Prostate gland (tissue), 2 donors: ENCODE measurements at regions of chr7 and their contacts with region 1.

Region 1: DNA sequence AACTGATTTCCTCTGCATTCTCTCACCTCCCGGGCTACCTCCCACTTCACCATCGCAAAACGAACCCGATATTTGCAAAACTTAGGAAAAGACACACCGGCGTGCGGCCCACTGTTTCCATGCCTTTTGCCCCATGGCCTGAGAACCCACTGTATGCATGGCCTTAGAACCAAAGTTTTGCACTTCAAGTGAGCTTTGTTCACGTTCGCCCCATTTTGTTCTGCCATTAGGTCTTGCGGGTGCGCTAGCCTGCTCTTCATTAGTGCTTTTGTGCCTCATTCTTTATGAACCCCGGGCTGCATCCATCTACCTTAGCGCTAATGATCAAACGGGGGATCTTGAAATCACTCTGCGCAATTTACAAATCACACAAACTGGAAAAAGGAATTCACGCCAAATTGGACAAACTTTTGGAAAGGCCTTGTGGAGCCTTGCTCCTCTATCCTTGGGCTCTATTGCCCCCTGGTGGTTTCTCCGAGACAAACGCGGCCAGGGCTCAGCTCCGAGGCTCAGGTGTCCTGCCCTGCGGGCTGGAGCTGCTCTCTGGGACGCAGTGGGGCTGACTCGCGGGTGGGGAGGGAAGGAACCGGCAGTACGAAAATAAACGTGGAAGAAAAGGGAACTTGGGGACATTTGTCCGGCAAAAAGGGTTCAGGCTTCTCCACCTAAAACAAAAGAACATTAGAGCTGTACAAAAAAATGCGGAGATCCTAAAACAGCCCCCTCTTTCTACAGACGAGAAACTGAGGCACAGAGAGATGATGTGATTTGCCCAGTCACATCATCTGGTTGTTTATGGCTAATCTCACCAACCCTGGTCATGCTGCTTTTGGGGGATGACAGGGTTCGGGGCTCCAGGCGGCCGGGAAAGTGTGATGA is 300.4 kb upstream of the NFE2L3 start:
- DNase-seq: peak; percentile 85
- H3K4me3 ChIP-seq: no peak overlapping the region
- H3K27ac ChIP-seq: peak overlapping the region in 1 of 2 donors; percentile 5
- H3K4me1 ChIP-seq: peaks cover 14% of the 10 kb centered on the region
- H3K27me3 ChIP-seq: peaks cover 15% of the 10 kb centered on the region
- CTCF ChIP-seq: peak; percentile 74 to 93 (median 86)
- POLR2A ChIP-seq: no peak

Region 2: DNA sequence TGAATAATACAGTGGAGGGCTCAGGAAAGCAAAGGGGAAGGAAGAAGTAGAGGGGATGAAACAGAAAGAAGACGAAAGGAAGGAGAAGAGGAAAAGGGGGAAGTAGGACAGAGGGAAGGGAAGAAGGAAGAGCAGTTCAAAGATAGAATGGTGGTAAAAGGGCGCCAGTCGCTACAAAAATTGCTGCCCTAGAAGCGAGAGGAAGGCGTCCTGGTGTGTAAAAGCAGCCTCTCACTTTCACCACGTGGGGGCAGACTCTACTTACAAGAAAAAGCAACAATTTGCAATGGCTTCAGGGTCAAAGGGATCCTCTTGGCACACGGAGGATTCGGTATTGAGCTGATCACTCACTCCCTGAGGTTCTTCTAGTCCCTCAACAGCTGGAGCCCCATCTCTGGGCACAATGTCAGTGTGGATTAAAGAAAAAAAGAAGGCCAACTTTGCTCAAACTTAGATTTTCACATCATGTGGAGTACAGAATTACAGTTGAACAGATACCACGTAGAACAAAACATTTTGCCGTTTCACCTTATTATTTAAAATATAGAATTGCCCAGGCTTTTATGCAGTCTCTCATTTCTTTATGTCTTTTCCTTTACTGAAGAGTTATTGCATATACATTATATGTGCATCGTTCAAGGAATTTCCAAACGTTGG is 591.9 kb before region 1 on chr7:
- intact Hi-C with region 1: loop called (anchors 5 kb)
- DNase-seq: peak; percentile 50
- H3K4me3 ChIP-seq: no peak overlapping the region
- H3K27ac ChIP-seq: no peak overlapping the region
- H3K4me1 ChIP-seq: no peaks in the 10 kb centered on the region
- H3K27me3 ChIP-seq: no peaks in the 10 kb centered on the region
- CTCF ChIP-seq: peak; percentile 70 to 89 (median 79)
- POLR2A ChIP-seq: no peak

Region 3: DNA sequence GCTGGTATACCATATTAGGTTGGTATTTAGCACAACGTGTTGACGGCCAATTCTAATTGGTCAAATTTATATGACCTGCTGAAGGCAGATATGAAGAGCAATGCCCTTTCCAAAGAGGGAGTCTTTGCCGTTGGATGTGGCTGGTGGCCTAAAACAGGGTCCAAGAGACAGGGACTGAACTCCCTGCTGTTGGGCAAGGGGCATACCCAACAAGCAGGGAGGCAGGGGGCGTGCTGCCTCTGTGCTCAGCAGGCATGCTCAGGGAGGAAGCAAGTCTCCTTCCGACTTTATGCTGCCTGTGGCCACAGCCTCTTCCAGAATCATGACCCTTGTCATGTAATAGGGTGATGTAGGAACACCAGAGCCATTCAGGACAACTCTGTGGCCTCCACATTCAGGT is 455.6 kb before region 1 on chr7:
- intact Hi-C with region 1: loop called (anchors 2 kb)
- DNase-seq: no peak
- H3K4me3 ChIP-seq: no peak overlapping the region
- H3K27ac ChIP-seq: no peak overlapping the region
- H3K4me1 ChIP-seq: peaks cover 4% of the 10 kb centered on the region
- H3K27me3 ChIP-seq: no peaks in the 10 kb centered on the region
- CTCF ChIP-seq: no peak
- POLR2A ChIP-seq: no peak

Region 4: GRCh38 chr7:25669961-25670841 is 181.4 kb before region 1 on chr7:
- intact Hi-C with region 1: loop called (anchors 5 kb)
- DNase-seq: peak; percentile 70
- H3K4me3 ChIP-seq: no peak overlapping the region
- H3K27ac ChIP-seq: peak overlapping the region; percentile 53 to 64
- H3K4me1 ChIP-seq: peaks cover 6% of the 10 kb centered on the region
- H3K27me3 ChIP-seq: no peaks in the 10 kb centered on the region
- CTCF ChIP-seq: no peak
- POLR2A ChIP-seq: no peak

Region 5: GRCh38 chr7:25789701-25790640 is 61.6 kb before region 1 on chr7:
- intact Hi-C with region 1: loop called (anchors 5 kb)
- DNase-seq: no peak
- H3K4me3 ChIP-seq: no peak overlapping the region
- H3K27ac ChIP-seq: no peak overlapping the region
- H3K4me1 ChIP-seq: no peaks in the 10 kb centered on the region
- H3K27me3 ChIP-seq: no peaks in the 10 kb centered on the region
- CTCF ChIP-seq: no peak
- POLR2A ChIP-seq: no peak

Region 6: DNA sequence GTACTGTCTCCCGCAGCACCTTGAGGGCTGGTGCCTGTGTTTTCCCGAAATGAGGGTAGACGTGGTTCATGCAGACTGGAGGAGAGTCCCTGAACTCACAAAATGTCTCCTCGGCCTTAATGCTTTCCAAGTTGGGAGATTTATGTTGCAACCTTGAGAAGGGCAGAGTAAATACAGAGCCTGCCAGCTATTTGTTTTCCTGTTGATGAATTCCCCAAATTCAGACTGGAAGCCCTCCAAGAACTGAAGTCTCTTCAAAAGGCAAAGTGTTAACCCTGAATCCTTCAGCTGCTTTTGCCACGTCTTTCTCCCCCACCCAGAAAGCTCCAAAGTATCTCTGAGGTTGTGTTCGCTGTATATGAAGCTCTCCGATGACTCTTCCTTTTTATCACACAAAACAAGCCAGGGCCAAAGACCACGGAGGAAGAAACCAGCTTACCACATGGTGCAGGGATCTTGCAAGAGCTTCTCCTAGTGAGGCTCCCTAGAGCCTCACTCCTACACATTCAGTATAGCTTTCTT is 45.8 kb after region 1 on chr7:
- intact Hi-C with region 1: no loop called
- DNase-seq: no peak
- H3K4me3 ChIP-seq: no peak overlapping the region
- H3K27ac ChIP-seq: no peak overlapping the region
- H3K4me1 ChIP-seq: no peaks in the 10 kb centered on the region
- H3K27me3 ChIP-seq: peaks cover 2% of the 10 kb centered on the region
- CTCF ChIP-seq: no peak
- POLR2A ChIP-seq: no peak